Breast epithelium (tissue), 4 donors: ENCODE measurements at regions of chr19 and their contacts with region 1.

Region 1: GRCh38 chr19:13574933-13575332 is 68.7 kb upstream of the CACNA1A start:
- DNase-seq: no peak
- H3K4me3 ChIP-seq: no peak overlapping the region
- H3K27ac ChIP-seq: no peak overlapping the region
- H3K4me1 ChIP-seq: no peaks in the 10 kb centered on the region
- H3K27me3 ChIP-seq: peaks cover 0 to 7% of the 10 kb centered on the region in 2 donors
- CTCF ChIP-seq: no peak
- POLR2A ChIP-seq: no peak

Region 2: DNA sequence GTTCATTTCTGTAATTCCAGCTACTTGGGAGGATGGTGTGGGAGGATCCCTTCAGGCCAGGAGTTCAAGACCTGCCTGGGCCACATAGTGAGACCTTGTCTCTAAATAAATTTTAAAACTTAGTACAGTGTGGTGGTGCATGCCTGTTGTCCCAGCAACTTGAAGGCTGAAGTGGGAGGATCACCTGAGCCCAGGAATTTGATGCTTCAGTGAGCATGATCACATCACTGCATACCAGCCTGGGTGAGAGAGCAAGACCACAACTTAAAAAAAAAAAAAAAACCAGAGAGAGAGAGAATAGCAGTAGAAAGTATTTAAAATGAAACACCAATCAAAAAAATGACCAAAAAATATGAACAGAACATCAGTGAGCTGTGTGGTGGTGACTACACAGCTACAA is 1829.1 kb before region 1 on chr19:
- intact Hi-C with region 1: loop called (anchors 10 kb)
- DNase-seq: no peak
- H3K4me3 ChIP-seq: no peak overlapping the region
- H3K27ac ChIP-seq: no peak overlapping the region
- H3K4me1 ChIP-seq: no peaks in the 10 kb centered on the region
- H3K27me3 ChIP-seq: no peaks in the 10 kb centered on the region
- CTCF ChIP-seq: no peak
- POLR2A ChIP-seq: no peak

Region 3: DNA sequence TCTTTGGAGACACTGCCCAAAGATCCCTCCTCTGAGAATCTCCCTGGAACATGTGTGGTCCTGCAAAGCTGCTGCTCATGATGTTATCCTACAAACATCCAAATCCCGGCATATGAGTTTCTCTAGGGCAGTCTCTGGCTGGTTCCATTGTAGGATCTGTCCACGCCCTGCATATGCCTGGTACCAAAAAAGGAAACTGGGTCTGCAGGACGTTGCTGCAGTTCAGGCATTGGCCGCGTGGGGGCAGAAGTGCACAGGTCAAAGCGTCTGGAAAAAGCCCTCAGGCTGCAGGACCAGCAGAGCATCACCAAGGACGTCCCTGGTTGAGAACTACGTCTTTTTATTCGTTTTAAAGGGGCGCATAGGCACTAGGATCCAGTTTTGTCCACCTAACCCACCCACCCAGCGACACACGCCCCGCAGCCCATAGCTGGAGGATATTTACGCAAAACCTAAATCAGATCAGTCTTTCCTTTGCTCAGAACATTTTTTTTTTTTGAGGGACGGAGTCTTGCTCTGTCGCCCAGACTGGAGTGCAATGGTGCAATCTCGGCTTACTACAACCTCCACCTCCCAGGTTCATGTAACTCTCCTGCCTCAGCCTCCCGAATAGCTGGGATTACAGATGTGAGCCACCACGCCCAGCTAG is 1010.8 kb before region 1 on chr19:
- intact Hi-C with region 1: no loop called
- DNase-seq: peak; percentile 80 to 93
- H3K4me3 ChIP-seq: no peak overlapping the region
- H3K27ac ChIP-seq: no peak overlapping the region
- H3K4me1 ChIP-seq: no peaks in the 10 kb centered on the region
- H3K27me3 ChIP-seq: no peaks in the 10 kb centered on the region
- CTCF ChIP-seq: peak; percentile 66 to 93 (median 83)
- POLR2A ChIP-seq: no peak

Region 4: GRCh38 chr19:13281567-13282291 is 293.2 kb before region 1 on chr19:
- intact Hi-C with region 1: loop called (anchors 10 kb)
- DNase-seq: no peak
- H3K4me3 ChIP-seq: no peak overlapping the region
- H3K27ac ChIP-seq: no peak overlapping the region
- H3K4me1 ChIP-seq: no peaks in the 10 kb centered on the region
- H3K27me3 ChIP-seq: peaks cover 0 to 17% of the 10 kb centered on the region in 2 donors
- CTCF ChIP-seq: no peak
- POLR2A ChIP-seq: no peak